Activated CD4-positive, alpha-beta T cell treated with anti-CD3 and anti-CD28 coated beads, Interleukin-2, amount 10 ng/mL, durations not matched to agents 24 days and 14 days (primary cell): ENCODE measurements at regions of chrX and their contacts with region 1.

Region 1: DNA sequence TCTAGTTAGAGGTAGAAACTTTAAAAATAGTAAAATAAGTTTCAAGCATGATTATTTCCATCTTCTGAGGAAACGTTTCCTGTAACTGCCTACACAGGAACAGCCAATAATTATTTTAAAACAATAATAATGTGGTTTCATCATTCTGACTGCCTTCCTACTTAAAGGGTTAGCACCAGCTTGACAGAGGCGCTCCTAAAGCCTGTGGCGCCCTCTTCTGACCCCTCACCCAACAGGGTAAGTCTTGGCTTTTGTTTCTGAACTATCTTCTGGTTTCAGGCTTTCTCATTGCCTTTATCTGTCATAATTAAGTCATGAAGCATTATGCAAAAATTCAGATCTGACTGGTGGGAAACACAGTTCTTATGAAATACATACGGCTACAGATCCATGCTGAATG is 96.7 kb downstream of the ITM2A start:
- DNase-seq: peak; percentile 88
- H3K4me3 Mint-ChIP-seq: peak overlapping the region; percentile 23
- H3K27ac Mint-ChIP-seq: peak overlapping the region; percentile 20
- H3K4me1 Mint-ChIP-seq: peaks cover 26% of the 10 kb centered on the region
- H3K27me3 Mint-ChIP-seq: no peaks in the 10 kb centered on the region

Region 2: GRCh38 chrX:78321809-78322208 is 948.6 kb before region 1 on chrX:
- intact Hi-C with region 1: loop called (anchors 10 kb)
- DNase-seq: peak; percentile 83
- H3K4me3 Mint-ChIP-seq: peak overlapping the region; percentile 86
- H3K27ac Mint-ChIP-seq: peak overlapping the region; percentile 96
- H3K4me1 Mint-ChIP-seq: peaks cover 34% of the 10 kb centered on the region
- H3K27me3 Mint-ChIP-seq: no peaks in the 10 kb centered on the region

Region 3: DNA sequence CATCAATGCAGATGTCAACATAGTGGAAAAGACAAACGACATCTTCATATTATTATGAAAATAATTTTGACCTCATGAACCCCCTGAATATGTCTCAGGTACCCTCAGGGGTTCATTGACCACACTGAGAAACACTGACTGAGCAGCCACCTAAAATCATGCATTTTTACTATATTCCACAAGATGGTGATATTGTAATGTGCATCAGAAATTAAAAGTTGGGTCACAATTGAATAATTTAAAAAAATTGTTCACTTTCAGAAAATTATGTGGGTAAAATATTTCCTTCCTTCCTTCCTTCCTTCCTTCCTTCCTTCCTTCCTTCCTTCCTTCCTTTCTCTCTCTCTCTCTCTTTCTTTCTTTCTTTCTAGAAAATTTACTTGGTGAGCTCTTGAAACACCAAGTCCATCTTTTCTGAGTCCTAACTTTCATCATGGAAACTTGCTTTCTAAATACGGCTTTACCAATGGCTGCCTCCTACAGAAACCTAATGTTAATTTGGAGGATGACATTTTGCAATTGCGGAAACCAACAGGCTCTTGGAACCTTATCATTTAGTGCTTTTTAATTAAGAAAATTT is 714.9 kb before region 1 on chrX:
- intact Hi-C with region 1: loop called (anchors 5 kb)
- DNase-seq: no peak
- H3K4me3 Mint-ChIP-seq: no peak overlapping the region
- H3K27ac Mint-ChIP-seq: no peak overlapping the region
- H3K4me1 Mint-ChIP-seq: peaks cover 5% of the 10 kb centered on the region
- H3K27me3 Mint-ChIP-seq: no peaks in the 10 kb centered on the region

Region 4: DNA sequence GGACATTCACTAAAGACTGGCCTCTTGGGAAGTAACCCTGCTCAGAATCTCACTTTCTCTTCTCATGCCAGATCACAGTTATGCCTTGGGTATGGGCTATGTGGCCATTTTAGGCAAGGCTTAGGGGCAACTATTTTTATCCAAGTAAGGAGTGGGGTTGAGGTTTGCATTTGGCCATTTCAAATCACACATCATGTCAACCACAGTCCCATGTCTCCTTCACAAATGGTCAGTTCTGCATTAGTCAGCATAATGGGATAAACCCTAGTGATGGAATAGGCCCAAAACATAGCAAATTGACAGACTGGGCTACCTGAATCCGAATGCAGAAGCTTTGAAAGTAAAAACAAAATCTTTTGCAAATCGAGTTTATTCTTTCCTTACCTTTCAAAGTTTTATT is 610.4 kb before region 1 on chrX:
- intact Hi-C with region 1: no loop called
- DNase-seq: no peak
- H3K4me3 Mint-ChIP-seq: no peak overlapping the region
- H3K27ac Mint-ChIP-seq: no peak overlapping the region
- H3K4me1 Mint-ChIP-seq: peaks cover 8% of the 10 kb centered on the region
- H3K27me3 Mint-ChIP-seq: no peaks in the 10 kb centered on the region

Region 5: DNA sequence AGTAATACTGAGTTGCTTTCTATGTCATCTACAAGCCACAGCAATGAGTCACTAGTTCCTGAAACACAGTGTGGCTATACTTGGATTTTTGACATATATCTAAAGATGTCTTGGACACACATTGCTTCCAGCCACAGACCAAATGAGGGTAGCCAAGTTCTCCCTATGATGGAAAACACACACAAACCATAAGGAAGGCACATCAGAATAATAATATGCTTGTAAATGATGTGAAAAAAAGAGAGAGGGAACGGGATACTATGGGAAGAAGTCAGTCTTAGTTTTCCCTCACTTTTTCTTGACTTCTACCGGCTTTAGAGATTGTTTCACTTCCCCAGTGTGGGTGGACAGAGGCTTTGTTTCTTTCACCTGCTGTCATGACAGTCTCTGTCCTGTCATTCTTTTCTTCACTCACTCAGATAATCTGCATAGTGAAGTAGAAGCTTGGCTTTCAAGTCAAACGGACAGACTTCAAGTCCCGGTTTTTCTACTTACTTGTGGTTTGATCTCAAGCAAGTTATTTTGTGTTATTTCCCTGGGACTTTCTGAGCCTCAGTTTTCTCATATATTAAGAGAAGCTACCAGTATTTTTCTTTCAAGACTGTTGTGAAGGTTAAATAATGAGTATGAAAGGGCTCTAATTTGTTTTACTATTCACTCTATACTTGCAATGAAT is 290.5 kb before region 1 on chrX:
- intact Hi-C with region 1: loop called (anchors 5 kb)
- DNase-seq: peak; percentile 58
- H3K4me3 Mint-ChIP-seq: peak overlapping the region; percentile 79
- H3K27ac Mint-ChIP-seq: peak overlapping the region; percentile 100
- H3K4me1 Mint-ChIP-seq: peaks cover 19% of the 10 kb centered on the region
- H3K27me3 Mint-ChIP-seq: no peaks in the 10 kb centered on the region

Region 6: GRCh38 chrX:79081895-79082512 is 188.4 kb before region 1 on chrX:
- intact Hi-C with region 1: loop called (anchors 2 kb)
- DNase-seq: peak; percentile 78
- H3K4me3 Mint-ChIP-seq: peak overlapping the region; percentile 78
- H3K27ac Mint-ChIP-seq: peak overlapping the region; percentile 87
- H3K4me1 Mint-ChIP-seq: peaks cover 14% of the 10 kb centered on the region
- H3K27me3 Mint-ChIP-seq: no peaks in the 10 kb centered on the region

Region 7: DNA sequence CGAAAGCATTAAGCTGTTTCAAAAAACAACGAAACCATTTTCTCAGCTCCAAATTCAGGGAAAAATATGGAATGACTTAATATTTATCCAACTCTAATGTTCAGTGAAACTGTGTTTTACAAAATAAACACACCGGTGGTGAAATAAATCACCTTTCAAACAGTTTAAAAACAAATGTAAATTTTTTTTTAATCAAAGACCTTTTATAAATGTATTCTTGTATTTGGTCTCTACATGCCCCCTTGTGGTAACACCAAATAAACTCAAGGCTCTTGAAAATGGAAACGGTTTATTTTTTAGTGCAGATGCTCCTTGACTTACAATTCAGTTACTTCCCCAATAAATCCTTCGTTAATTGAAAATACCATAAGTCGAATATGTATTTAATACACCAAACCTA is 142.6 kb after region 1 on chrX:
- intact Hi-C with region 1: loop called (anchors 5 kb)
- DNase-seq: no peak
- H3K4me3 Mint-ChIP-seq: peak overlapping the region; percentile 69
- H3K27ac Mint-ChIP-seq: peak overlapping the region; percentile 53
- H3K4me1 Mint-ChIP-seq: peaks cover 18% of the 10 kb centered on the region
- H3K27me3 Mint-ChIP-seq: no peaks in the 10 kb centered on the region